Activated CD4-positive, alpha-beta memory T cell treated with anti-CD3 and anti-CD28 coated beads for 36 hours (primary cell): ENCODE measurements at regions of chr11 and their contacts with region 1.

Region 1: DNA sequence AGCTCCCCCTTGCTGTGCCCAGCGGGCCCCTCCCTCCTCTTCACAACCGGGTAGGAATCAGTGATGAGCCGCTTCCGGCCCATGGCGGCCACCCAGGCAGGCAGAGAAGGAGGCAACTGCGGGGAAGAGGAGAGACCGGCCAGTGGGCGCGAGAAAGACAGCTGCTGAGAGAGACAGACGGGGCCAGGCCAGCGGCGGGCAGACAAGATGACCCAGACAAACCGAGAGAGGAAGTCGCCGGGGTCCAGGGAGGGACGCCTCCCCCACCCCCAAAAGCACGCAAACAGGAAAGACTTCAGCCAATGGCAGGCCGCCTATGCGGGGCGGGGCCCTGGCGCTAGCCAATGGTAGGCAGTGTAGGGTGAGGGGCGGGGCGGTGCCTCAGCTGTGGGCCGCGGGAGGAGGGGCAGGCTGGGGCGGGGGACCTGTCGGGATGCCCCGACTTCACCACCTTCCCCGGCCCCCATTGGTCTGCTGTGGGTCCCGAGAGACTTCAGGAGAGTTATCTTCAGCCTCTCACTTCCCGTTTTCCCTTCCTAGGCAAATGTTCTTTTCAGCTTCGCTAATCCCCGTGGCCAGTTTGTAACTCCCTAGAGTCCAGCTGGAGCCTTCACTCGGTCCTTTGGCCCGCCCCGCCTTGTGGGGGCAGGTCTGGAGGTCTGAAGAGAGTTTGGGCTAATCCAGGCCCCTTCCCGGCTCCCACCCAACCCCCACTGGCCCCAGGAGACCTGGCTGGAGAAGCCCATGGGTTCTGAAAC is at the start of gene POLD4:
- DNase-seq: peak; percentile 98
- H3K4me3 Mint-ChIP-seq: peak within 1 kb of the TSS; percentile 93
- H3K27ac Mint-ChIP-seq: peak within 1 kb of the TSS; percentile 98
- H3K4me1 Mint-ChIP-seq: peaks cover 44% of the 10 kb centered on the region
- H3K27me3 Mint-ChIP-seq: no peaks in the 10 kb centered on the region
- total RNA-seq, gene POLD4: 62.0 to 67.4 TPM

Region 2: DNA sequence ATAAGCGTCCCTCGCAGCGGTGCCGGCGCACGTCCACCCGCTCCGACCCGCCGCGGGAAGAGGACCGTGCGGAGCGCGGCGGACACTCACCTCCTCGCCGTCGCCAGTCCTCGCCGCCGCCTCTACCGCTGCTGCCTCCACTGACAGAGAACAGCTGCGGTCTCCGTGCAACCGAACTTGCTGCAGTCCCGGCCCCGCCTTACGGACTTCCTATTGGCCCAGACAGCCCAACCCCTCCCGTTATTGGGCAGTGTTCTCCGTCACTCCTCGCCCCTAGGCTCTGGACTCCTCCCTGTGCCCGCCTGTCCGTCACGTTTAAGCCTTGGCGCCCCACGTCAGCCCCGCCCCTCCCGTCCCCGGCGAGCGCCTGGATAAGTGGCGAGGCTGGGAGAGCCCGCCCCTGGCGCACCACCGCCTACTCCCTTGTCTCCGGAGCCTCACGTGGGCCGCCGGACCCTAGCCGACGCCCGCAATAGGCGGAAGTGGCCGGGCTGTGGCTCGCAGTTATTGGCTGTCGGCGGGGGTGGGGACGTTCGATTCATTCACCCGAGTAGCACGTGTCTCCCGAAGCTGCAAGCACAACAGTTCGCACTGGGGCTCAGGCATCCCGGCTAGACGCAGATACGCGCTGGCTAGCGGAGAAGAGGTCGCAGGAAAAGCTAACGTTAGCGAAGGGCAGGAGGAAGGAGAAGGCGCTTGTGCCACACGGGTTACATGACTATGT is 395.1 kb before region 1 on chr11 and contains the start of gene PC:
- CTCF ChIA-PET with region 1: no interaction called
- POLR2A ChIA-PET with region 1: no interaction called
- intact Hi-C with region 1: loop called (anchors 10 kb)
- DNase-seq: peak; percentile 99
- H3K4me3 Mint-ChIP-seq: peak within 1 kb of the TSS; percentile 76
- H3K27ac Mint-ChIP-seq: peak within 1 kb of the TSS; percentile 71
- H3K4me1 Mint-ChIP-seq: peaks cover 18% of the 10 kb centered on the region
- H3K27me3 Mint-ChIP-seq: no peaks in the 10 kb centered on the region
- total RNA-seq, gene PC: 13.1 to 15.3 TPM

Region 3: GRCh38 chr11:67317205-67317887 is 36.1 kb before region 1 on chr11:
- CTCF ChIA-PET with region 1: interaction called, 31 read pairs
- POLR2A ChIA-PET with region 1: no interaction called
- intact Hi-C with region 1: loop called (anchors 2 kb)
- DNase-seq: peak; percentile 99
- H3K4me3 Mint-ChIP-seq: peak overlapping the region; percentile 96
- H3K27ac Mint-ChIP-seq: peak overlapping the region; percentile 99
- H3K4me1 Mint-ChIP-seq: peaks cover 28% of the 10 kb centered on the region
- H3K27me3 Mint-ChIP-seq: no peaks in the 10 kb centered on the region

Region 4: GRCh38 chr11:67373925-67374618 is 20.6 kb after region 1 on chr11:
- CTCF ChIA-PET with region 1: interaction called, 995 read pairs
- POLR2A ChIA-PET with region 1: interaction called, 4 read pairs
- intact Hi-C with region 1: loop called (anchors 2 kb)
- DNase-seq: peak; percentile 68
- H3K4me3 Mint-ChIP-seq: peak overlapping the region; percentile 79
- H3K27ac Mint-ChIP-seq: peak overlapping the region; percentile 38
- H3K4me1 Mint-ChIP-seq: peaks cover 38% of the 10 kb centered on the region
- H3K27me3 Mint-ChIP-seq: peaks cover 10% of the 10 kb centered on the region

Region 5: DNA sequence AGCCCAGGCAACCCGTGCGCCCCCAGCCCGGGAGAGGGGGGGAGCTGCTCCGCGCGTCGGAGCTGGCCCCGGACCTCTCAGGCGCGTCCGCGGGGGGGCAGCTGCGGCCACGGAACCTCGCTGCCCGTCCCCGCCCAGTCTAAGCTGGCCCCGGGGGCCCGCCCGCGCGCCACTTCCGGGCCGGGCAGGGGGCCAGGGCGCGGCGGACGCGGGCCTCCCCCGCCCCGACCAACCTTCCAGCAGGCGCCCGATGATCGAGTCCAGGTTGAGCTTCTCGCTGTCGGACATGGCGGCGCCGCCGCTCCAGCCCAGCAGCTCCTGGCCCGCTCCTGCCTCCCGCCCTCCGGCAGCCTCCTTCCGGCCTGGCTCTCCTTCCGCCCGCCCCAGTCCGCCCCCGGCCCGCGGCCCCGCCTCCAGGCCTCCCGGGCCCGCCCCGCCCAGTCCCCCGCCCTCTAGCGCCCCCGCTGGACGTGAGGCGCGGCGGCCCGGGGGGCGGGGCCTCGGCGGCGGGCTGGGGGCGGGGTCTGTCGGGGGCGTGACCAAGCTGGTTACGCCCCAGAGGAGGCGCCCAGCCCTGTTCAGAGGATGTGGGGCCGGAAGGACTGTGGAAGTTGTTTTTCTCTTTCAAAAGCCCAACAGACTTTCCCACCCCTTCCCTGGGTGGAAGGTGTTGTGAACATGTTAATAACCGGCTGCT is 48.1 kb after region 1 on chr11 and contains the start of gene PPP1CA:
- CTCF ChIA-PET with region 1: interaction called, 26 read pairs
- POLR2A ChIA-PET with region 1: no interaction called
- intact Hi-C with region 1: no loop called
- DNase-seq: peak; percentile 95
- H3K4me3 Mint-ChIP-seq: peak within 1 kb of the TSS; percentile 87
- H3K27ac Mint-ChIP-seq: peak within 1 kb of the TSS; percentile 93
- H3K4me1 Mint-ChIP-seq: peaks cover 64% of the 10 kb centered on the region
- H3K27me3 Mint-ChIP-seq: no peaks in the 10 kb centered on the region
- total RNA-seq, gene PPP1CA: 261 to 267 TPM

Region 6: DNA sequence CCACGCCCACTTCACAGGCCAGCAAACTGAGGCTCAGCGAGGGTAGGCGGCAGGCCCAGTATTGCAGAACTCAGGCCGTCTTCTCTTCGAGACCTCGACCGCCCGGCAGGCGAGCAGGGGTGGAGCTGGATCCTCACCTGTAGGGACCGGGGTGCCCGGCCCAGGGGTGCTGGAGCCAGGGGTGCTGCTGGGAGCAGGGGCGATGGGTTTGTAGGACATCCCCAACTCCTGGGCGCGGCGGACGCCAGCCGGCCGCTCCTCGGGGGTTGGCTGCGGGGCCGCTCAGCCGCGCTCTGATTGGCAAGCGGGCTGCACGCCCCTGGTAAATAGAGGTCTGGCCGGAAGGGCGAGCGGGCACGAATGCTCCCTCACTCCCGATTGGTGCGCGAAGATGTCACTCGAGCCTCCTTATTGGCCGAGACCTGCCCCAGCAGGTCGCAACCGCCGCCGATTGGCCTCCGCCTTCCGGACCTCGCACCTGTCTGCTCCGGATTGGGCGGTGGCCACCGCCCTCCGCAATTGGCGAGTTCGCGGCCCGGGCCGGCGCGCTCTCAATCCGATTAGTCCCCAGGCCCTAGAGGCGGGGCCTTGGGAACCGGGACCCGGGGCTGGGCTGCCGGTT is 154.5 kb after region 1 on chr11 and contains the start of gene CDK2AP2:
- CTCF ChIA-PET with region 1: interaction called, 4 read pairs
- POLR2A ChIA-PET with region 1: no interaction called
- intact Hi-C with region 1: loop called (anchors 1 kb)
- DNase-seq: peak; percentile 99
- H3K4me3 Mint-ChIP-seq: peak within 1 kb of the TSS; percentile 90
- H3K27ac Mint-ChIP-seq: peak within 1 kb of the TSS; percentile 98
- H3K4me1 Mint-ChIP-seq: peaks cover 30% of the 10 kb centered on the region
- H3K27me3 Mint-ChIP-seq: no peaks in the 10 kb centered on the region
- total RNA-seq, gene CDK2AP2: 82.7 to 84.7 TPM

Region 7: GRCh38 chr11:67648140-67649123 is 294.9 kb after region 1 on chr11:
- CTCF ChIA-PET with region 1: no interaction called
- POLR2A ChIA-PET with region 1: no interaction called
- intact Hi-C with region 1: no loop called
- DNase-seq: peak; percentile 68
- H3K4me3 Mint-ChIP-seq: no peak overlapping the region
- H3K27ac Mint-ChIP-seq: no peak overlapping the region
- H3K4me1 Mint-ChIP-seq: peaks cover 27% of the 10 kb centered on the region
- H3K27me3 Mint-ChIP-seq: peaks cover 4% of the 10 kb centered on the region